Mammary epithelial cell (primary cell): ENCODE measurements at regions of chr7 and their contacts with region 1.

Region 1: GRCh38 chr7:88169717-88170320 is 50.0 kb downstream of the SRI start:
- DNase-seq: no peak
- H3K4me3 ChIP-seq: no peak overlapping the region
- H3K27ac ChIP-seq: no peak overlapping the region
- H3K4me1 ChIP-seq: no peaks in the 10 kb centered on the region
- H3K27me3 ChIP-seq: no peaks in the 10 kb centered on the region
- CTCF ChIP-seq: peak; percentile 46 to 58

Region 2: DNA sequence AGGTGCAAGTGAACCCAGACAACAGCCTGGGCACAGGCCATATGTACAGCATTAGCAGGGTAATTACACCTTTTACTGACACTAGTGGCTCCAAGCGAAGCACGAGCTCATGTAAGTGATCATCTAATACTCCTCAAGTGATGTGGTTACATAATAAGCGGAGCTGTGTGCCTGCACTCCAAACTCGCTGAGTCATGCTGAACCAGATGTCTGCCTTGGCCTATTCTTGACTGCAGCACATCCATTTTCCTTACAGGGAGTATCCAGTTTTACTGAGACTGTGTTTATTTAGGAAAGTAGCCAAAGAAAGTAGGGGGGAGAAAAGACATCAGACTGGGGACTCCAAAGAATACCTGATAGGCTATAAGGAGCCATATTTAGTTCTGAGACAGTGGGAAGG is 1436.0 kb before region 1 on chr7:
- CTCF ChIA-PET with region 1: no interaction called
- dilution Hi-C with region 1: no loop called
- in situ Hi-C with region 1: no loop called
- intact Hi-C with region 1: no loop called
- DNase-seq: no peak
- H3K4me3 ChIP-seq: no peak overlapping the region
- H3K27ac ChIP-seq: no peak overlapping the region
- H3K4me1 ChIP-seq: no peaks in the 10 kb centered on the region
- H3K27me3 ChIP-seq: no peaks in the 10 kb centered on the region
- CTCF ChIP-seq: no peak

Region 3: DNA sequence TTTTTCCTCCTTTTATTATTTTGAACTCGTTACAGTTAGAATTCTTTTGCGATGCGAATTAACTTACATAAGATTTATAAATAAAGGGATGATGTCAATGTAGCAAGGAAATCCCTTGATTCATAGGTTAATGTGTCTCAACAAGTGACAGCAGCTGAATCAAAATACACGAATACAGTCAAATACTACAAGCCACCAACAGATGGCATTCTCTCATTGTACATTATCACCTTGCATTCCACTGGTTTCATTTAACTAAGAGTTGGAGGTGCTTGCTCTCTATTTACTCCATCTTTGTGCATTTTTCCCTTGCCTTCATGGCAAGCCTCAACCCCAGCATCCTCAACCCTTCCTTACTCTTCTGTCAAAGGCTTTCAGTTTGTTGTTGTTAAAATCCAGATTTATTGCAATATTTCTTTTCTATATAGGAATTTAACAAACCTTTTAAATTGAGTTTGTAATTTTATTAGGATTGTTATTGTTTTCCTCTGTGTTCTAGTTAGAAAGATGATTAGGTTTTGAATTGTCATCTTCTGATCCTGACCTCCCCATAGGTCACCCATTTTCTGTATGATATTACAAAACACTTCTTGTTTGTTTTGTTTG is 371.9 kb before region 1 on chr7:
- CTCF ChIA-PET with region 1: no interaction called
- dilution Hi-C with region 1: no loop called
- in situ Hi-C with region 1: no loop called
- intact Hi-C with region 1: loop called (anchors 5 kb)
- DNase-seq: peak; percentile 68
- H3K4me3 ChIP-seq: no peak overlapping the region
- H3K27ac ChIP-seq: no peak overlapping the region
- H3K4me1 ChIP-seq: no peaks in the 10 kb centered on the region
- H3K27me3 ChIP-seq: no peaks in the 10 kb centered on the region
- CTCF ChIP-seq: peak; percentile 62 to 70

Region 4: DNA sequence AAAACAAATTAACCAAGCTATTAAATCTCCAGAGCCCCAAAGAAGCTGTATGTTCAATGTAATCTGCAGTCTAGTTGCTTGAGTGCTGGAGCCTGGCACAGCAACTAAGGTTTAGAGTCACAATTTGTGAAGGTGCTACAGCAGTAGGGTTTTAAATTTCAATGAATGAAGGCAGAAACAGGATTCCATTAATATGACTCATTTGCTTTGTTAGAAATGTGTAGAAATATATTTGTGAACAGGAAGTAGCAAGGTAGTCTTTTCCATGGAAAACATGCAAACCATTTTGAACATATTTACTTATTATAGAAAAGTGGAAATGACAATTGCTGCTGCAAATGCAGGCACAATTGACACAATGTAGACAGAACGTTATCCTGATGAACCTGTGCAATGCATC is 285.9 kb after region 1 on chr7:
- CTCF ChIA-PET with region 1: no interaction called
- dilution Hi-C with region 1: no loop called
- in situ Hi-C with region 1: no loop called
- intact Hi-C with region 1: no loop called
- DNase-seq: peak; percentile 7
- H3K4me3 ChIP-seq: no peak overlapping the region
- H3K27ac ChIP-seq: no peak overlapping the region
- H3K4me1 ChIP-seq: no peaks in the 10 kb centered on the region
- H3K27me3 ChIP-seq: no peaks in the 10 kb centered on the region
- CTCF ChIP-seq: no peak